ENCODE measurements at regions of chr20 and their contacts with region 1.

Region 1: DNA sequence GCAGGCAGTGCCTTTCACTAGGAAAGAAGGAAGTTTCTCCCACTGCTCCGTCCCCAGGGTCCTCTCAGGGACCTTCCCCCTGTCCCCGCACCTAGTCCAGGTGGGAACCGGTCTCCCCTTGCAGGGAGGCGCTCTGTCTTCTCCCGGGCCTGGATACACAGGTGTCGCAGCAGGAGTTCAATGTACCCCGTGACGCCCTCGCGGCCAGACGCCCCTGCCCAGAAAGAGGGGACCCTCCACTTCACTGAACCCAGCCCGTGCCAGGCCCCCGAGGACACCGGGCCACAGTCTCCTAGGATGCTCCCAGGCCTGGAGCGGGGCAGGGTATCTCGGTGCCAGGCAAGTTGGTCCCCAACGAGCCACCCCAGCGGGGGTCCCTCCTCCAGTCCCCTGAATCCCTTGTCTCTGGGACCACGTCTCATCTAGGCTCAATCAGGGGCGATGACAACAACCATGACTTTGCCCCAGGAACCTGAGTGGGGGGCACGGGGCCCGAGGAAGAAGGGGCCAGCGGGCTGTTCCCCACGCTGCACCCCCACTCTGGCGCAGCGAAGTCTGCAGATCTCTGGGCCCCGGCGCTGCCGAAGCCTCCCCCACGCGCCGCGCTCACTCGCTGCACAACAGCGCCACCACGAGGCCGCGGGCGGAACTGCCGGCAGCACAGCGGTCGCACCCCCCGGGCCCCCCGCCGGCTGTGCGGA is 103.0 kb downstream of the EDN3 start:
- DNase-seq: peak; percentile 52 to 83 (median 72)
- ATAC-seq: peak; percentile 71
- H3K4me3 ChIP-seq: peak overlapping the region; percentile 25
- H3K4me3 Mint-ChIP-seq: peak overlapping the region; percentile 76
- H3K27ac ChIP-seq: no peak overlapping the region
- H3K27ac Mint-ChIP-seq: no peak overlapping the region
- H3K4me1 ChIP-seq: peaks cover 21% of the 10 kb centered on the region
- H3K4me1 Mint-ChIP-seq: no peaks in the 10 kb centered on the region
- H3K27me3 ChIP-seq: peaks cover 27 to 41% of the 10 kb centered on the region in 2 experiments
- H3K27me3 Mint-ChIP-seq: no peaks in the 10 kb centered on the region
- CTCF ChIP-seq: peak; percentile 99

Region 2: GRCh38 chr20:58864350-58864749 is 539.1 kb before region 1 on chr20:
- CTCF ChIA-PET with region 1: no interaction called
- POLR2A ChIA-PET with region 1: no interaction called
- intact Hi-C with region 1: loop called in 1 of 2 experiments (anchors 1 kb)
- DNase-seq: peak in 3 of 14 experiments; percentile 25 to 55 (median 50)
- ATAC-seq: peak; percentile 69
- H3K4me3 ChIP-seq: no peak overlapping the region
- H3K4me3 Mint-ChIP-seq: no peak overlapping the region
- H3K27ac ChIP-seq: no peak overlapping the region
- H3K27ac Mint-ChIP-seq: no peak overlapping the region
- H3K4me1 ChIP-seq: no peaks in the 10 kb centered on the region
- H3K4me1 Mint-ChIP-seq: no peaks in the 10 kb centered on the region
- H3K27me3 ChIP-seq: peaks cover 0 to 10% of the 10 kb centered on the region in 2 experiments
- H3K27me3 Mint-ChIP-seq: peaks cover 32% of the 10 kb centered on the region
- CTCF ChIP-seq: peak; percentile 34

Region 3: DNA sequence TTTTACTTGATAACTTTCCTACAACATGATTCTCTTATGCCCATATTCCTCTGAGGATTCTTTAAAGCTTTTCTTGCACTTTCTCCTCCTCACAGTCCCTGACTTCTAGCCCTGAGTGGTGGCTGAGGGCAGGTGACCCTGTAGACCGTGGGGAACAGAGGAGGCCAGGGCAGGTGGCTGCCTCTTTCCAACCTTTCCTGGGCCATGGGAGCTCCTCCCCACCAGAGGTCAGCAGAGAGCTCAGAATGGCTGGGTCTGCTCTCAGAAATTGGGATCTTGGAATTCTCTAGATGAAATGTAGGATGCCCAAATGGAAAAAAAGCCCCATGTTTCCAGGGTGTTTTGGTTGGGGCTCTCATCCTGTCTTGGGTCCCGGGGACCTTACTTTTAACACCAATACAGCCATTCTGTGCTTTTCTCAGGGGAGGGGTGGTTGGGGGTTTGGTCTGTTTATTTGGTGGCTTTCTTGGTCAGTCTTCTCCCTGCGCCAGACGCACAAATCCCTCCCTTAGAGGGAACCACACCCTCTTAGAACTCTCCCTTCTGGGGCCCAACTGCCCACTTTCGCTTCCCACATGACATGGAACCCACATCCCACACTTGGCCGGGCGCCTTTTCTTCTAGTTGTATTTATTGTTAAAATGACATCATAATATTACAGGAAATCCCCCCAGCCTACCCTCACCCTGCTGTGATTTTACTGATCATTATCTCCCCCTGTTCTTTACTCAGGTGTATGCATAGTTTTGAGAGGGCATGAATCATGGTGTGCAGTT is 533.0 kb before region 1 on chr20:
- CTCF ChIA-PET with region 1: no interaction called
- POLR2A ChIA-PET with region 1: no interaction called
- intact Hi-C with region 1: loop called in 1 of 2 experiments (anchors 1 kb)
- DNase-seq: peak in 12 of 14 experiments; percentile 38 to 75 (median 50)
- ATAC-seq: peak; percentile 67
- H3K4me3 ChIP-seq: no peak overlapping the region
- H3K4me3 Mint-ChIP-seq: no peak overlapping the region
- H3K27ac ChIP-seq: no peak overlapping the region
- H3K27ac Mint-ChIP-seq: no peak overlapping the region
- H3K4me1 ChIP-seq: peaks cover 3% of the 10 kb centered on the region
- H3K4me1 Mint-ChIP-seq: peaks cover 5% of the 10 kb centered on the region
- H3K27me3 ChIP-seq: no peaks in the 10 kb centered on the region
- H3K27me3 Mint-ChIP-seq: no peaks in the 10 kb centered on the region
- CTCF ChIP-seq: peak; percentile 86

Region 4: GRCh38 chr20:59055295-59055694 is 348.1 kb before region 1 on chr20:
- CTCF ChIA-PET with region 1: no interaction called
- POLR2A ChIA-PET with region 1: no interaction called
- intact Hi-C with region 1: loop called in 1 of 2 experiments (anchors 5 kb)
- DNase-seq: peak in 4 of 14 experiments; percentile 40 to 58 (median 53)
- ATAC-seq: no peak
- H3K4me3 ChIP-seq: no peak overlapping the region
- H3K4me3 Mint-ChIP-seq: no peak overlapping the region
- H3K27ac ChIP-seq: no peak overlapping the region
- H3K27ac Mint-ChIP-seq: no peak overlapping the region
- H3K4me1 ChIP-seq: no peaks in the 10 kb centered on the region
- H3K4me1 Mint-ChIP-seq: no peaks in the 10 kb centered on the region
- H3K27me3 ChIP-seq: peaks cover 6 to 7% of the 10 kb centered on the region in 2 experiments
- H3K27me3 Mint-ChIP-seq: peaks cover 24% of the 10 kb centered on the region
- CTCF ChIP-seq: no peak

Region 5: DNA sequence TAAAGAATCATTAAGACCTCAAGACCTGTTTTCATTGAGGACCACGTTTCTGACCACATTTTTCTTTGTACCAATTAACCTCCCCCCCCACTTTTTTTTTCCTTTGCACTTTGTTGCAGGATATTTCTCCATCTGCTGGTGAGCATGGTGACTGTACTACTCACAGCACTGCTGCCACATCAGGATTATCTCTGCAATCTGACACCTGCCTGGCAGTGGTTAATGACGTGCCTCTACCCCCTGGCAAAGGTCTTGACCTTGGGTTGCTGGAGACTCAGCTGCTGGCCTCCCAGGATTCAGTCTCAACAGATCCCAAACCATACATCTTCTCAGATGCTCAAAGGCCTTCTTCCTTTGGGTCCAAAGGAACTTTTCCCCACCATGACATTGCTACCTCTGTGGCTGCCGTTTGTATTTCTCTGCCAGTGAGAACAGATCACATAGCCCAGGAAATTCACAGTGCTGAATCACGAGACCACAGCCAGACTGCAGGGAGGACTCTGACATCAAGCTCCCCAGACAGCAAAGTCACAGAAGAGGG is 149.6 kb before region 1 on chr20:
- CTCF ChIA-PET with region 1: no interaction called
- POLR2A ChIA-PET with region 1: interaction called, 10 read pairs
- intact Hi-C with region 1: loop called in 1 of 2 experiments (anchors 5 kb)
- DNase-seq: peak in 12 of 14 experiments; percentile 11 to 64 (median 30)
- ATAC-seq: peak; percentile 63
- H3K4me3 ChIP-seq: no peak overlapping the region
- H3K4me3 Mint-ChIP-seq: peak overlapping the region; percentile 78
- H3K27ac ChIP-seq: peak overlapping the region; percentile 46 to 51
- H3K27ac Mint-ChIP-seq: peak overlapping the region; percentile 94
- H3K4me1 ChIP-seq: peaks cover 28% of the 10 kb centered on the region
- H3K4me1 Mint-ChIP-seq: peaks cover 82% of the 10 kb centered on the region
- H3K27me3 ChIP-seq: no peaks in the 10 kb centered on the region
- H3K27me3 Mint-ChIP-seq: no peaks in the 10 kb centered on the region
- CTCF ChIP-seq: no peak

Region 6: GRCh38 chr20:59422885-59423865 is 19.8 kb after region 1 on chr20:
- CTCF ChIA-PET with region 1: no interaction called
- POLR2A ChIA-PET with region 1: no interaction called
- intact Hi-C with region 1: no loop called
- DNase-seq: no peak
- ATAC-seq: no peak
- H3K4me3 ChIP-seq: no peak overlapping the region
- H3K4me3 Mint-ChIP-seq: no peak overlapping the region
- H3K27ac ChIP-seq: no peak overlapping the region
- H3K27ac Mint-ChIP-seq: no peak overlapping the region
- H3K4me1 ChIP-seq: no peaks in the 10 kb centered on the region
- H3K4me1 Mint-ChIP-seq: no peaks in the 10 kb centered on the region
- H3K27me3 ChIP-seq: no peaks in the 10 kb centered on the region
- H3K27me3 Mint-ChIP-seq: peaks cover 7% of the 10 kb centered on the region
- CTCF ChIP-seq: no peak

Region 7: DNA sequence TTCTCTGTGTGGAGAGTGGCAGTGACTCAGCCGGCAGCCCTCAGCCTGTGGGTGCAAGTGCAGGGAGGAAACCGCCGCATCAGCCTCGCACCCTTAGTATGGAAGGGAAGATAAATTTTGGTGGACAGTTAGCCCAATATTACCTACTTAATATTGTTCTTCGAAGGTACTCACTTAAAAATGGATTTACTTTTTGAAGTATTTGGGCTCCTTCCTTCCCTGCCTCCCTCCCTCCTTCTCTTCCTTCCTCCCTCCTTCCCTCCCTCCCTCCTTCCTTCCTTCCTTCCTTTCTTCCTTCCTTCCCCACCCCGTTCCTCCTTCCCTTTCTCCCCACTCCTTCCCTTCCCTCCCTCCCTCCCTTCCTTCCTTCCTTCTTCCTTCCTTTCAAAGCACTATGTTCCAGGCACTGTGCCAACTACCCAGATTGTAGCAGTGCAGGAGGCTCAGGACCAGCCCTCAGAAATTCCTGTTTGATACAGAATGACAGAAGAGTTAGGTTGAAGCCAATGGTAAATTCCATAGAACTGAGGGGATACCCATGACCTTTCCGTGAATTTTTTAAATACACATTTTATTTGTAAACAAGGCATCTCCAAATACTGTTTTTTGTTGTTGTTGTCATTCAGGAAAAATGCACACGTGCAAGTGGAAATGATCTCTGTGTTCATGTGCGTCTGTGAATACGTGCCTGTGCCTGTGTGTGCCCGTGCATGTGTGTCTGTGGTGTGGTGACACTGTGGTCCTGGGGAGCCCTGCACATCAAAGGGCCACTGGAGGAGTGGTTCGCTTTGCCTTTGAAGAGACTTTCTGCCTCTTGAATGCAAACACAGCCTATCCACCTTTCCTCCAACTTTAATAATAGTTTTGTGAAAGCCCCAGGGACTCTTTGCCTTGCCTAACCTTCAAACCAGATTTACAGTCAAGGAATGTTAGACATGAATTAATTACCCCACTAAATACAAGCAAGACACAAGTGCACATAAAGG is 38.7 kb after region 1 on chr20:
- CTCF ChIA-PET with region 1: no interaction called
- POLR2A ChIA-PET with region 1: no interaction called
- intact Hi-C with region 1: no loop called
- DNase-seq: no peak
- ATAC-seq: no peak
- H3K4me3 ChIP-seq: no peak overlapping the region
- H3K4me3 Mint-ChIP-seq: no peak overlapping the region
- H3K27ac ChIP-seq: no peak overlapping the region
- H3K27ac Mint-ChIP-seq: no peak overlapping the region
- H3K4me1 ChIP-seq: no peaks in the 10 kb centered on the region
- H3K4me1 Mint-ChIP-seq: no peaks in the 10 kb centered on the region
- H3K27me3 ChIP-seq: peaks cover 7 to 8% of the 10 kb centered on the region in 2 experiments
- H3K27me3 Mint-ChIP-seq: peaks cover 51% of the 10 kb centered on the region
- CTCF ChIP-seq: no peak